A549 (cell line): ENCODE measurements at regions of chrX and their contacts with region 1.

Region 1: DNA sequence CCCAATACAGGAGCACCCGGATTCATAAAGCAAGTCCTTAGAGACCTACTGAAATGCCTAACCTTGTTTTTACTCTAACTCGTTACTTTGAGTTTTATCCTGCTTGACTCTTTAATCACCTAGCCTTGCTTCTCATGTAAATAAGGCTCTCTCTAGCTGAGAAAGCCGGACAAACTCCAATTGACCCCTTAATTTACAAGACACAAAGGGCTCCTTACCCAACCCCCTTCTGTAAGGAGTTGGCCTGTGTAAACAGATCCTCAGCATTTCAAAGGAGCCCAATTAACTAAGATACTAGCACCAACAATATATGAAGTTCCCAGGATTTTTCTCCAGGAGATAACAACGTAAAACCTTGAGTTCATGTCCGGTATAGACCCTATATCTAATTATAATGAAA is 61.7 kb downstream of the CT47B1 start:
- DNase-seq: no peak
- ATAC-seq: no peak
- H3K4me3 ChIP-seq: no peak overlapping the region
- H3K27ac ChIP-seq: no peak overlapping the region
- H3K4me1 ChIP-seq: no peaks in the 10 kb centered on the region
- CTCF ChIP-seq: no peak
- EP300 ChIP-seq: no peak
- POLR2A ChIP-seq: no peak
- RAD21 ChIP-seq: no peak

Region 2: GRCh38 chrX:120790118-120790517 is 23.9 kb before region 1 on chrX:
- CTCF ChIA-PET with region 1: interaction called, 10 read pairs
- POLR2A ChIA-PET with region 1: no interaction called
- DNase-seq: peak; percentile 33 to 65
- ATAC-seq: peak; percentile 64 to 79; a peak in 4 of 6 replicates
- H3K4me3 ChIP-seq: no peak overlapping the region
- H3K27ac ChIP-seq: no peak overlapping the region
- H3K4me1 ChIP-seq: peaks cover 18% of the 10 kb centered on the region
- CTCF ChIP-seq: peak; percentile 76
- EP300 ChIP-seq: no peak
- POLR2A ChIP-seq: no peak
- RAD21 ChIP-seq: peak; percentile 87